Activated T-helper 1 cell treated with anti-CD3 and anti-CD28 coated beads, Interleukin-12 subunit alpha, Interleukin-12 subunit beta, Interleukin-2, Interleukin-4 antibody, amounts not matched to agents 30 ng/mL and 10 ng/mL and 1 ng/mL, durations not matched to agents 14 hours and 24 hours and 36 hours (primary cell): ENCODE measurements at regions of chr11 and their contacts with region 1.

Region 1: GRCh38 chr11:134223836-134224709 is at the starts of genes NCAPD3 and VPS26B:
- DNase-seq: peak; percentile 94
- H3K4me3 Mint-ChIP-seq: peak within 1 kb of the TSS; percentile 98
- H3K27ac Mint-ChIP-seq: peak within 1 kb of the TSS; percentile 99
- H3K4me1 Mint-ChIP-seq: peaks cover 63% of the 10 kb centered on the region
- H3K27me3 Mint-ChIP-seq: no peaks in the 10 kb centered on the region
- total RNA-seq, gene NCAPD3: 103 and 107 TPM in 2 replicates
- total RNA-seq, gene VPS26B: 43.0 and 43.2 TPM in 2 replicates

Region 2: GRCh38 chr11:133947321-133947756 is 276.7 kb before region 1 on chr11:
- intact Hi-C with region 1: loop called (anchors 1 kb)
- DNase-seq: peak; percentile 63
- H3K4me3 Mint-ChIP-seq: peak overlapping the region; percentile 69
- H3K27ac Mint-ChIP-seq: peak overlapping the region; percentile 83
- H3K4me1 Mint-ChIP-seq: peaks cover 80% of the 10 kb centered on the region
- H3K27me3 Mint-ChIP-seq: no peaks in the 10 kb centered on the region

Region 3: GRCh38 chr11:134033696-134034491 is 190.2 kb before region 1 on chr11:
- intact Hi-C with region 1: loop called (anchors 5 kb)
- DNase-seq: peak; percentile 65
- H3K4me3 Mint-ChIP-seq: peak overlapping the region; percentile 24
- H3K27ac Mint-ChIP-seq: peak overlapping the region; percentile 59
- H3K4me1 Mint-ChIP-seq: peaks cover 55% of the 10 kb centered on the region
- H3K27me3 Mint-ChIP-seq: peaks cover 7% of the 10 kb centered on the region

Region 4: DNA sequence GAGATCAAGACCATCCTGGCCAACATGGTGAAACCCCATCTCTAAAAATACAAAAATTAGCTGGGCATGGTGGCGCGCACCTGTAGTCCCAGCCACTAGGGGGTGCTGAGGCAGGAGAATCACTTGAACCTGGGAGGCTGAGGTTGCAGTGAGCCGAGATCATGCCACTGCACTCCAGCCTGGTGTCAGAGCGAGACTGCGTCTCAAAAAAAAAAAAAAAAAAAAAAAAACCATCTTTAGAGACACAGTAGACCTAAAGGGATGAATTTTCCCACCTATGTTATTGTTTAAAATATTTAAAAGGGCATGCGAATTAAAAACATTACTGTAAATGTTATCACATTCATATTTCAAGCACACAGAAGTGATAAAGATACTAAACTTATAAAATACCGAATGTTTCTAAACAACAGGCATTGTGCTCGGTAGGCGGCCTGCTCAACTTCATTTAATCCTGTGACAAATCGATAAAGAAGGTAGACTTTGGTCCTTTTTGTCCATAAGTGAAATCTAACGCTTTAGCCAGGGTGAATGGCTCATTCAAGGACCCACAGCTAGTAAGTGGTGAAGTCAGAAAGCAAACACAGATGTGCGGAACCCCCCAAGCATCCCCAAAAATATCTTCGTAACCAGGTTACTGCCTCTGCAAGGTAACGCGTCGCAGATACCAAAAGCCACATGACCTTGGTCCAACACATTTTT is 16.4 kb before region 1 on chr11:
- intact Hi-C with region 1: loop called (anchors 1 kb)
- DNase-seq: peak; percentile 59
- H3K4me3 Mint-ChIP-seq: no peak overlapping the region
- H3K27ac Mint-ChIP-seq: no peak overlapping the region
- H3K4me1 Mint-ChIP-seq: peaks cover 5% of the 10 kb centered on the region
- H3K27me3 Mint-ChIP-seq: no peaks in the 10 kb centered on the region

Region 5: DNA sequence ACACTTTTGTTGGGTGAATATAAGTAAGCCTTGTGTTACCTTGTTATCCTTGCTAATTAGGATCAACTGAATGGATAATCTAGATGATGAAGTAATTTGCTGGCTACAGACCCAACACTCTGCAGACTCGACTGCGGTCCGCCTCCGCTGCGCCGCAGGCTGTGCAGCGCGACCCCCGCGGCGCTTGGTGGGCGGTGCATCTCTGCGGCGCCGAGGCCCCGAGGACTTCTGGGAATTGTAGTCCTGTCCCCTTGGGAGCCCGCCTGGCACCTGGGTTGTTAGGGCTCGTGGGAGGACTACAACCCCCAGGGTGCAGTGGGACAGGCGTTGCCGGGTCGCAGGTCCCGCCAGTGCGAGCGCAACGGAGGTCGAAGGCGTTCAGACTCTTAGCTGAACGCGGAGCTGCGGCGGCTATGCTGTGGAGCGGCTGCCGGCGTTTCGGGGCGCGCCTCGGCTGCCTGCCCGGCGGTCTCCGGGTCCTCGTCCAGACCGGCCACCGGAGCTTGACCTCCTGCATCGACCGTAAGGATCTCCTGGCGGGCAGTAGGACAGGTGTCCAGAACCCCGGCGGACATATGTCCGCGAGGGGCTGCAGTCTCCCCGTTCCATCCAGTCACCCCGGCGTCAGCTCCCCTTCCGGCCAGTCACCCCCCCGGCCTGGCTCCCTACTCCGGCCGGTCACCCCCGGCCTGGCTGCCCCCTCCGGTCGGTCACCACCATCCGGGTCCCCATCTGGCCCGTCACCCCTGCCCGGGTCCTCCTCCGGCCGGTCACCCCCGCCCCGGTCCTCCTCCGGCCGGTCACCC is 29.3 kb after region 1 on chr11 and contains the starts of genes ACAD8 and THYN1:
- intact Hi-C with region 1: loop called (anchors 1 kb)
- DNase-seq: peak; percentile 94
- H3K4me3 Mint-ChIP-seq: peak within 1 kb of the TSS; percentile 94
- H3K27ac Mint-ChIP-seq: peak within 1 kb of the TSS; percentile 86
- H3K4me1 Mint-ChIP-seq: peaks cover 46% of the 10 kb centered on the region
- H3K27me3 Mint-ChIP-seq: no peaks in the 10 kb centered on the region
- total RNA-seq, gene ACAD8: 25.6 and 26.2 TPM in 2 replicates
- total RNA-seq, gene THYN1: 55.0 and 58.8 TPM in 2 replicates

Region 6: DNA sequence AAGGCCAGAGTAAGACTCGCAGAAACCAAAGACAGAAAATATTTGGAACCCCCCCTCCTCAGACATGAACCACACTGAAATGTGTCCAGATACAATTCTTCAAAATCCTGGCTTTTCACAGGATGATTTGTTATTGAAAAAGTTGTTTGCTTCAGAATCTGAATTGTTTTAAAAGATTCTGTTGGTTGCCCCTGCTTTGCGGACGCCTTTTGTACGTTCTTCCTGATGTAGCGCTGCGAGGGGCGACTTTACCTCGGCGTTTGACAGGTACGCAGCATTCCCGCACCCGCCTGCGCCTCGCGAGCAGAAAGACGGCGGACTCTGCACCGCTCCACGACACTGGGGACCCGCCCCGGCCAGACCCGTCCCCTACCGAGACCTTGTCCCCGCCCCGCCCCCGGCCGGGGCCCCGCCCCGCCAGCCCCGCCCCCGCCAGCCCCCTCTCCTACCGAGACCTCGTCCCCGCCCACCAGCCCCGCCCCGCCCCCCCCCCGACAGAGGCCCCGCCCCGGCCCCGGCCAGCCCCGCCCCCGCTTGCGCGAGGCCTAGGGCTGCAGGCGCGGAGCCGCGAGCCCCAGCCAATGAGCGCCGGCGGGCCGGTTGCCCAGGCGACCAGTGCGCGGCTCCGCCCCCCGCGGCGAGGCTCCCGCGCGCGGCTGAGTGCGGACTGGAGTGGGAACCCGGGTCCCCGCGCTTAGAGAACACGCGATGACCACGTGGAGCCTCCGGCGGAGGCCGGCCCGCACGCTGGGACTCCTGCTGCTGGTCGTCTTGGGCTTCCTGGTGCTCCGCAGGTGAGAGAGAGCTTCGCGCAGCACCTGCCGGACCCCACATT is 107.5 kb after region 1 on chr11 and contains the start of gene GLB1L2:
- intact Hi-C with region 1: loop called (anchors 1 kb)
- DNase-seq: peak; percentile 84
- H3K4me3 Mint-ChIP-seq: peak within 1 kb of the TSS; percentile 85
- H3K27ac Mint-ChIP-seq: peak within 1 kb of the TSS; percentile 59
- H3K4me1 Mint-ChIP-seq: peaks cover 24% of the 10 kb centered on the region
- H3K27me3 Mint-ChIP-seq: peaks cover 39% of the 10 kb centered on the region
- total RNA-seq, gene GLB1L2: 8.9 and 11.5 TPM in 2 replicates

Region 7: GRCh38 chr11:134531327-134532130 is 307.5 kb after region 1 on chr11:
- intact Hi-C with region 1: no loop called
- DNase-seq: no peak
- H3K4me3 Mint-ChIP-seq: no peak overlapping the region
- H3K27ac Mint-ChIP-seq: no peak overlapping the region
- H3K4me1 Mint-ChIP-seq: no peaks in the 10 kb centered on the region
- H3K27me3 Mint-ChIP-seq: peaks cover 6% of the 10 kb centered on the region